ENCODE measurements at regions of chr14 and their contacts with region 1.

Region 1: DNA sequence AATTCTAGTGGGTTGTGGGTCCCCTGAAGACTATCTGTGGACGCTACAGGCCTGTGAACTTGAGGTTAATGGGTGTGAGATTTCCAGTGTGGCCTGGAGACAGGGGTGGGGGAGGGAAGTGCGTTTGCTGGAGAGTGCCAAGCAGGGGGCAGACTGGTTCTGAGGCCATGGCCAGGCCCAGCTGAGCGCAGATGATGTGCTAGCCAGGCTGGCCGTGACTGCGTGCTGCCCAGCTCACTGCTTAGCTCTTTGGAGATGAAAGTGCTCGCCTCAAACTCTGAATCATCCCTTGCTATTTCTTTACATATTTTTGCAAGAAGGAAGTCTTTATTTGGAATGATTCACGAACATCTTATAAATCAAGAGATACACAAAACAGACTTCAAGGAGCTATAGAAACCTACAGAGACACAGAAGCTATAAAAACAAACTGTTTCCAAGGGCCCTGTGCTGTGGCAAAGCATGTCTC is 75.2 kb upstream of the PLEKHG3 start:
- DNase-seq: no peak
- H3K4me3 ChIP-seq: no peak overlapping the region
- H3K27ac ChIP-seq: peak overlapping the region in 2 of 8 donors; percentile 21 to 28
- H3K4me1 ChIP-seq: peaks cover 0 to 25% (median 9%) of the 10 kb centered on the region in 6 donors
- H3K27me3 ChIP-seq: no peaks in the 10 kb centered on the region
- CTCF ChIP-seq: no peak
- POLR2A ChIP-seq: no peak

Region 2: DNA sequence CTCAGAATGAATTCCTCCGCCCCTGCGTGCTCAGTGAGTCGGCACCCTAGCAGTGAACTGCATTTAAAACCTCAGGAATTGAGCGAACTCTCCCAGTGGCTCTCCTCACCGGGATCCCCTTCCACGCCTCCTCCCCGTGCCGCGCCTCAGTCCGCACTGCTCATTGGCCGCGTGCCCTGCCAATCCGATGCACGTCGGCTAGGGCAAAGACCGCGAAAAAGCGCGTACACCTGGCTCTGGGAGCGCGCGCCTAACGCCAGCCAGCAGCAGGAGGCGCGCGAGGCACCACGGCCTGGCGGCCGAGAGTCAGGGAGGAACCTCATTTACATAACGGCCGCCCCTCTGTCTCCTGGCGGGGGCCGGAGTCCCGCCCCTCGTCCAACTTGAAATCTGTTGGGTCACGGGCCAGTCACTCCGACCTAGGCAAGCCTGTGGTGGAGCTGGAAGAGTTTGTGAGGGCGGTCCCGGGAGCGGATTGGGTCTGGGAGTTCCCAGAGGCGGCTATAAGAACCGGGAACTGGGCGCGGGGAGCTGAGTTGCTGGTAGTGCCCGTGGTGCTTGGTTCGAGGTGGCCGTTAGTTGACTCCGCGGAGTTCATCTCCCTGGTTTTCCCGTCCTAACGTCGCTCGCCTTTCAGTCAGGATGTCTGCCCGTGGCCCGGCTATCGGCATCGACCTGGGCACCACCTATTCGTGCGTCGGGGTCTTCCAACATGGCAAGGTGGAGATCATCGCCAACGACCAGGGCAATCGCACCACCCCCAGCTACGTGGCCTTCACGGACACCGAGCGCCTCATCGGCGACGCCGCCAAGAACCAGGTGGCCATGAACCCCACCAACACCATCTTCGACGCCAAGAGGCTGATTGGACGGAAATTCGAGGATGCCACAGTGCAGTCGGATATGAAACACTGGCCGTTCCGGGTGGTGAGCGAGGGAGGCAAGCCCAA is 88.5 kb before region 1 on chr14 and contains the start of gene HSPA2:
- intact Hi-C with region 1: loop called (anchors 10 kb)
- DNase-seq: peak; percentile 99
- H3K4me3 ChIP-seq: peak within 1 kb of the TSS; percentile 48 to 89 (median 68)
- H3K27ac ChIP-seq: peak within 1 kb of the TSS in 7 of 8 donors; percentile 65 to 85 (median 80)
- H3K4me1 ChIP-seq: peaks cover 6 to 42% (median 28%) of the 10 kb centered on the region in 6 donors
- H3K27me3 ChIP-seq: peaks cover 0 to 32% (median 13%) of the 10 kb centered on the region in 7 donors
- CTCF ChIP-seq: peak; percentile 82 to 96 (median 92)
- POLR2A ChIP-seq: peak; percentile 34 to 78 (median 57)
- total RNA-seq, gene HSPA2: 15.2 to 53.8 (median 31.4) TPM

Region 3: DNA sequence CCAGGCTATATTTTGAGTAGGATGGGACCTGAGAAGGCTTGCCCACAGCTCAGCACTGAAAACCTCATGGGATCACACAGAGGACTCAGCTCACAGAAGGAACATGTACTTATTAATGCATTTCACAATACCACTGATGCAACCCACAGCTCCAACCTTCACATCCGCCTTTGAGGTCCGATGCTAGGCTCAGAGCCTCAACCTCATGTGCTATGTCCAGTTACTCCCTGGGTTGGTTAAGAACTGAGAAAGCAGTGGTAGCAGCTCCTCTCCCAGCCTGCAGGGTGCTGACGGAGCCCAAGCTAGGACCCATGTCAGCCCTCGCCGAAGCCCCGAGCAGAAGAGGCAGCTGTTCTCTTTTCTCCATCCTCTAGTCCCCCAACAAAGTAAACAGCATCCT is 197.9 kb after region 1 on chr14:
- intact Hi-C with region 1: no loop called
- DNase-seq: no peak
- H3K4me3 ChIP-seq: no peak overlapping the region
- H3K27ac ChIP-seq: peak overlapping the region in 1 of 8 donors; percentile 64
- H3K4me1 ChIP-seq: peaks cover 0 to 25% (median 10%) of the 10 kb centered on the region in 6 donors
- H3K27me3 ChIP-seq: peaks cover 0 to 12% (median 7%) of the 10 kb centered on the region in 7 donors
- CTCF ChIP-seq: no peak
- POLR2A ChIP-seq: no peak